Pancreas (tissue), 10 donors: ENCODE measurements at regions of chr3 and their contacts with region 1.

Region 1: DNA sequence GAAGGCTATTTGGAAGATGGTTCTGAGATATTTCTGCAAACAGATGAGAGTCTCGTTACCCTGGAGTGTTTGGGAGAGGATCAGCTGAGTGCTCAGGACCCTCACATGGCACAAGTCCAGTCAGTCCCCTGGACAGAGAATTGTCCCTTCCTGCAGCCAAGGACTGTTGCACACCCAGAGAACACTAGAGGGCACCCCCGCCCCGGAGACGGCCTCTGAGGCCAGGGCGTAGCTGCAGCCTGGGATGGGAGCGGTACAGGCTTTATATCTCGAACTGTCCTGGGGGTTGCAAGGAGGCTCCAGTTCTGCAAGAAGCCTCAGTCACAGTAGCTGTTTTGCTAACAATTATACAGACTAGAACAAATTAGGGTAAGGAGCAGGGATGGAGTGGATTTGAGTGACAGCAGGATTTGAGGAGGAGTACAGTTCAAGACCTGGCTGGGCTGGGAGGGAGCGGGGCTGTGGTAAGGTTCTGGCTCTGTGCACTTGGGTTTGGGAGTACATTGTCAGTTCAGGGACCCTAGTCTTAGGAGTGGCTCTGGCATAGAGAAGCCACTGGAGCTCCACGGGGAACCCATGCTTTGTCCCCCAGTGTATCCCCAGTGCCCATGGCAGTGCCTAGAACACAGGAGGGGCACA is 67.6 kb upstream of the HACD2 start:
- DNase-seq: peak; percentile 58 to 90 (median 78)
- ATAC-seq: peak; percentile 86 to 98 (median 96)
- H3K4me3 ChIP-seq: no peak overlapping the region
- H3K27ac ChIP-seq: no peak overlapping the region
- H3K4me1 ChIP-seq: no peaks in the 10 kb centered on the region
- H3K27me3 ChIP-seq: no peaks in the 10 kb centered on the region
- CTCF ChIP-seq: peak; percentile 72 to 84 (median 78)

Region 2: DNA sequence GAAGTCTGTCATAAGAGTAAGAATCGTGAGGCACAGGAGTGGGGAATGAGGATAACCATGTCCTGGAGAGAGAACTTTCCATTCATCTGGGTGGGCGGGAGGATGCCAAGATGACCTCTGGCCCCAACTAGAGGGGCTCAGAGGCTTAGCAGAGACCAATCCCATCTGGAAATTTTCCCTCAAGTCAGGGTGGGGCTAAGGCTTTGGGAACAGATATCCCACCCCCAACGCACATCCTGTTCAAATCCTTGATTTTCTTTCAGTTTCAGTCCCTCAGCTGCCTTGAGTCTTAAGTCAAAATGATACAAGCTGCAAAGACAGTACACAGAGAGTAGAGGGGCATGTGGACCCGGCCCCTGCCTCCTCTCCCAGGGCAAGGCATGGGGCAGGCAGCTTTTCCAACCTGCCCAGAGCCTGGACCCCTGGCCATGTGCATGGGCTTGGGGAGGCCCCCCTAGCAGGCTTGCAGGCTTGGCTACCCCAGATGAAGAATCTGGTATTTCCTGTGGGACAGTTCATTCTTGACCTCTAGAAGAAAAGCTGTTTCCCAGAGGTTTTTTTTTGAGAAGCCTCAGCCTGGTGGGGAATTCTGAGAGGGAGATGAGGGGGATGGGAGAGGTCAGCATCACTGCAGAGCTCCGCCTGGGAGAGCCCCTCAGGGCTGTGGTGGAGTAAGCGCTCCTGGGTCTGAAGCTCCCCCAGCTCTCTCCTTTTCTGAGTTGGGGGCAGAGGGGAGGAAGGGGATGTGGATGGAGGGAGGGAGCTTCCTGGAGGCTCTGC is 42.1 kb after region 1 on chr3:
- intact Hi-C with region 1: loop called in 1 of 3 experiments (anchors 5 kb)
- DNase-seq: no peak
- ATAC-seq: peak in 1 of 4 donors; percentile 19
- H3K4me3 ChIP-seq: no peak overlapping the region
- H3K27ac ChIP-seq: no peak overlapping the region
- H3K4me1 ChIP-seq: no peaks in the 10 kb centered on the region
- H3K27me3 ChIP-seq: no peaks in the 10 kb centered on the region
- CTCF ChIP-seq: no peak